Endothelial cell of umbilical vein (primary cell): ENCODE measurements at regions of chr12 and their contacts with region 1.

Region 1: GRCh38 chr12:121668750-121669520 is 519 bp downstream of the MORN3 start:
- DNase-seq: peak; percentile 24
- H3K4me3 ChIP-seq: no peak overlapping the region
- H3K27ac ChIP-seq: no peak overlapping the region
- H3K4me1 ChIP-seq: peaks cover 8% of the 10 kb centered on the region
- H3K27me3 ChIP-seq: no peaks in the 10 kb centered on the region
- CTCF ChIP-seq: peak; percentile 62 to 75
- POLR2A ChIP-seq: no peak

Region 2: DNA sequence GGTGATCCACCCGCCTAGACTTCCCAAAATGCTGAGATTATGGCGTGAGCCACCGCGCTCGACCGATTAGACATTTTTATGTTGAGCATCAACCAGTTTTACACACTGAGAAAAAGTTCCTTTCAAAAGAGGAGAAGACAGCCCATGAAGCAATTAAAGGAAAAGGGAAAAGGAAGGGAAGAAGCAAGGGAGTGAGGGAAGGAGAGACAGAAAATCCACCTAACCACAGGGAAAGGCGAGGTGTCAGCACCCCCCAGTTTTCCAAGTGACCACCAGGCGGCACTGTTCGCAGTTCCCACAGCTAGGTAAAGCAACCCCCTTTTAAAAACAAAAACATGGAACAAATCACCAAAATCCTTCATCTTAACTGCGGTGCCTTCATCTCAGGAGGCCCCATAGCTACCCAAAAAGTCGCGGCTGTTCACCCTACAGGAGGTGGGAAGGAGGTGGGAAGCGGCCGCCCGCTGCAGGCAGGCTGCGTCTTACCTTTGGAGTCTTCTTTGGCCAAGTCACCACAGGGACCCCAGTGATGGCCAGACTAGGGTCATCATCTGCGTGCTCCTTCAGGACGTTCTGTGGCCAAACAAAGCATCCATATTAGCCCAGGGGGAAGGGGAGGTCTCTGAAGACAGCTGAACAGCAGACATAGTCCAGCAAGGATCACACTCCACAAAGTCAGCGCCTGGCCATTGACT is 174.7 kb before region 1 on chr12:
- CTCF ChIA-PET with region 1: interaction called, 23 read pairs
- POLR2A ChIA-PET with region 1: no interaction called
- dilution Hi-C with region 1: no loop called
- intact Hi-C with region 1: no loop called
- DNase-seq: peak; percentile 31
- H3K4me3 ChIP-seq: no peak overlapping the region
- H3K27ac ChIP-seq: no peak overlapping the region
- H3K4me1 ChIP-seq: no peaks in the 10 kb centered on the region
- H3K27me3 ChIP-seq: no peaks in the 10 kb centered on the region
- CTCF ChIP-seq: peak; percentile 82 to 94
- POLR2A ChIP-seq: no peak

Region 3: GRCh38 chr12:121550974-121551634 is 117.8 kb before region 1 on chr12:
- CTCF ChIA-PET with region 1: interaction called, 671 read pairs
- POLR2A ChIA-PET with region 1: interaction called, 21 read pairs
- dilution Hi-C with region 1: no loop called
- intact Hi-C with region 1: loop called (anchors 1 kb)
- DNase-seq: no peak
- H3K4me3 ChIP-seq: no peak overlapping the region
- H3K27ac ChIP-seq: no peak overlapping the region
- H3K4me1 ChIP-seq: no peaks in the 10 kb centered on the region
- H3K27me3 ChIP-seq: no peaks in the 10 kb centered on the region
- CTCF ChIP-seq: no peak
- POLR2A ChIP-seq: no peak

Region 4: GRCh38 chr12:121579981-121580868 is 88.7 kb before region 1 on chr12:
- CTCF ChIA-PET with region 1: interaction called, 30 read pairs
- POLR2A ChIA-PET with region 1: no interaction called
- dilution Hi-C with region 1: no loop called
- intact Hi-C with region 1: no loop called
- DNase-seq: peak; percentile 58
- H3K4me3 ChIP-seq: peak overlapping the region; percentile 59 to 84 (median 76)
- H3K27ac ChIP-seq: peak overlapping the region; percentile 73
- H3K4me1 ChIP-seq: peaks cover 33% of the 10 kb centered on the region
- H3K27me3 ChIP-seq: no peaks in the 10 kb centered on the region
- CTCF ChIP-seq: no peak
- POLR2A ChIP-seq: peak; percentile 17

Region 5: GRCh38 chr12:121637231-121637914 is 31.6 kb before region 1 on chr12:
- CTCF ChIA-PET with region 1: interaction called, 29 read pairs
- POLR2A ChIA-PET with region 1: no interaction called
- dilution Hi-C with region 1: no loop called
- intact Hi-C with region 1: no loop called
- DNase-seq: no peak
- H3K4me3 ChIP-seq: no peak overlapping the region
- H3K27ac ChIP-seq: no peak overlapping the region
- H3K4me1 ChIP-seq: peaks cover 2% of the 10 kb centered on the region
- H3K27me3 ChIP-seq: no peaks in the 10 kb centered on the region
- CTCF ChIP-seq: no peak
- POLR2A ChIP-seq: no peak

Region 6: DNA sequence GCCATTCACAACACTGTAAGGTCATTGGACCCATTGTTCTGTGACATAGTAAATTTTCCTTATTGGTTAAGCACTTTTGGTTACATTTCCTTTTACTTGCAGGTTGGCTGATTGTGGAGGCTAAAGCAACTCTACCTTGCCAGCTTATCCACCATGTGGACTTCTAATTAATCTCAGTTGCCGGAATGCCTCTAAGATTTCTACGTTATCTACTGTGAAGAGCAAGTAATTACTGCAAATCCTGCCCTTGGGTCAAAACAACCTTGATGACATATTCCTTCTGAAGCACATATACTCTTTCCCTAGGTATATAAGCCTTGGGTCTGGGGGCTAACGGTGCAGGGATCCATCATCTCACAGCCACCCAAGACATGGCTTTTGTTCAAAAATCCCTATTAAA is 20.0 kb after region 1 on chr12:
- CTCF ChIA-PET with region 1: interaction called, 20 read pairs
- POLR2A ChIA-PET with region 1: no interaction called
- dilution Hi-C with region 1: no loop called
- intact Hi-C with region 1: no loop called
- DNase-seq: no peak
- H3K4me3 ChIP-seq: no peak overlapping the region
- H3K27ac ChIP-seq: no peak overlapping the region
- H3K4me1 ChIP-seq: no peaks in the 10 kb centered on the region
- H3K27me3 ChIP-seq: no peaks in the 10 kb centered on the region
- CTCF ChIP-seq: no peak
- POLR2A ChIP-seq: no peak